Sigmoid colon (tissue), 7 donors: ENCODE measurements at regions of chr16 and their contacts with region 1.

Region 1: GRCh38 chr16:67521095-67521804 is 7.4 kb upstream of the RIPOR1 start:
- DNase-seq: peak; percentile 98
- H3K4me3 ChIP-seq: peak overlapping the region; percentile 26 to 52 (median 50)
- H3K27ac ChIP-seq: peak overlapping the region; percentile 94 to 96 (median 96)
- H3K4me1 ChIP-seq: peaks cover 0 to 16% (median 12%) of the 10 kb centered on the region in 4 donors
- H3K27me3 ChIP-seq: no peaks in the 10 kb centered on the region
- CTCF ChIP-seq: peak; percentile 84 to 96 (median 89)
- EP300 ChIP-seq: no peak
- POLR2A ChIP-seq: no peak

Region 2: GRCh38 chr16:67480833-67481560 is 40.3 kb before region 1 on chr16 and contains the start of gene ATP6V0D1:
- intact Hi-C with region 1: loop called (anchors 5 kb)
- DNase-seq: peak; percentile 99
- H3K4me3 ChIP-seq: peak within 1 kb of the TSS; percentile 82 to 97 (median 94)
- H3K27ac ChIP-seq: peak within 1 kb of the TSS; percentile 87 to 98 (median 94)
- H3K4me1 ChIP-seq: peaks cover 0 to 52% (median 47%) of the 10 kb centered on the region in 4 donors
- H3K27me3 ChIP-seq: no peaks in the 10 kb centered on the region
- CTCF ChIP-seq: peak; percentile 80 to 89 (median 86)
- EP300 ChIP-seq: peak in 1 of 4 donors; percentile 80
- POLR2A ChIP-seq: peak; percentile 57 to 77
- total RNA-seq, gene ATP6V0D1: 70.3 to 112 (median 93.6) TPM

Region 3: DNA sequence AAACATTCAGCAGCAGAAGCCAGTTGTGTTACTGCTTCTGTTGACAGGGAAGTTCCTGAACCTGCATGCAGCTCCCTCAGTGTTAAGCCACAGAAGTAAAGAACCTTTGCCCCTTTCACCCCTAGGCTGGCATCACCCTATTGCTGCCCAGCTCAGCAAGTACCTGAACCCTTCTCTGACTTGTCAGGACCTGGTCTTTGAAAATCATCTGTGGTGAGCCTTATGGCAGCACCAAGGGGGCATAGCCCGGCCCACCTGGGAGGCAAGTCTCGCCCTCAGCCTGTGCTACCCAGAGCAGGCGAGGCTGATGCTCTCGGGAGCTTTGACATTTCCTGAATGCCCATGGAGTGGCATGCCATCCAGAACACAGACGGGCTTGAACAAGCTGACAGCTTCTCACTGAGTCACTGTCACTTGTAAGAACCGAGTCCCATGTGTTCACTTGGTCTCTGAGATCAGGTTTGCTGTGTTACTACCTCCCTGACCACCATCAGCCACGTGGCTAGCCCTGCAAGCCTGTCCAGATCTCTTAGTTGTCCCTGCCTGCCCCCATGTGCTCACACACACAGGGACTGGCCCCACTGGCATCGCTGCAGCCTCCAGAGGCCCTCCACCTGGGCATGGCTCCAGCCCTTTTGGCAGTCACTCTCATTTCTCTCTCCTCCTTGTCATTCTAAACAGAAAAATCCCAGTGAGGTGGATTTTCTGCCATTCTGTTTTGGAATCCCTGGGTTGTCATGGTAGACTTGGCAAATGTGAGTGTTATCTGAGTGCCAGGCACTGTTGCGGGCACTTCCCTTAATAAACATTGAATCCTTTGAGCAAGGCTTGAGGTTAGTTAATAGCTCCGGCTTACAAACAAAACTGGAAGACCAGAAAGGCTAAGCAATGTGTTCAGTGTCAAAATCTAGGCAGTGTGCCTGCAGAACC is 120.8 kb after region 1 on chr16:
- intact Hi-C with region 1: loop called (anchors 1 kb)
- DNase-seq: peak; percentile 89
- H3K4me3 ChIP-seq: no peak overlapping the region
- H3K27ac ChIP-seq: peak overlapping the region; percentile 6 to 51 (median 50)
- H3K4me1 ChIP-seq: peaks cover 0 to 32% (median 22%) of the 10 kb centered on the region in 4 donors
- H3K27me3 ChIP-seq: peaks cover 18 to 29% (median 22%) of the 10 kb centered on the region in 3 donors
- CTCF ChIP-seq: no peak
- EP300 ChIP-seq: no peak
- POLR2A ChIP-seq: no peak

Region 4: DNA sequence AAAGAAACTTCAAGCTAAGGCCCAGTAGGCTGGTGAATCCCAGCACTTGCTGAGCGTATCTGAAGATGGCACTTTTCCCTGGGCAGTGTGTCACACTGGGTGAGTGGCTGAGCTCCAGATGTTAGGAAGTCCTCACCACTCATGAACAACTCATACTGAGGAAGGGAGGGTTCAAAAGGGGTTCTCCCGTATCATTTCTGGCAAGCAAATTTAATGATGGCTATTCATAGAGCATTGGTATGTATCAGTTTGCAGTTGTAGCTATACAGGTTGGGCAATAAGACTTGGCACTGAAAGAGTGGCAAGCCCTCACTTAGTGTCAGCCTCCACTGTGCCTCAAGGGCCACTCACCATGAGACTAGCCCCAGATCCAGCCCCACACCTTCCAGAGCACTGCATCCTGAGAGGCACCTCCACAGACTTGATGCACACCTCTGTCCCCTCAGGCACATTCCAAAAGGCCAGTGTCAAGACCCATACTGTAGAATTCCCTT is 187.2 kb after region 1 on chr16:
- intact Hi-C with region 1: no loop called
- DNase-seq: peak; percentile 32
- H3K4me3 ChIP-seq: no peak overlapping the region
- H3K27ac ChIP-seq: no peak overlapping the region
- H3K4me1 ChIP-seq: no peaks in the 10 kb centered on the region
- H3K27me3 ChIP-seq: no peaks in the 10 kb centered on the region
- CTCF ChIP-seq: no peak
- EP300 ChIP-seq: no peak
- POLR2A ChIP-seq: no peak

Region 5: GRCh38 chr16:67806428-67807147 is 285.3 kb after region 1 on chr16 and contains the starts of genes RANBP10 and TSNAXIP1:
- intact Hi-C with region 1: loop called (anchors 10 kb)
- DNase-seq: peak; percentile 99
- H3K4me3 ChIP-seq: peak within 1 kb of the TSS; percentile 83 to 99 (median 96)
- H3K27ac ChIP-seq: peak within 1 kb of the TSS; percentile 80 to 92 (median 86)
- H3K4me1 ChIP-seq: peaks cover 0 to 28% (median 22%) of the 10 kb centered on the region in 4 donors
- H3K27me3 ChIP-seq: no peaks in the 10 kb centered on the region
- CTCF ChIP-seq: no peak
- EP300 ChIP-seq: no peak
- POLR2A ChIP-seq: peak; percentile 39 to 75
- total RNA-seq, gene RANBP10: 7.1 to 10.0 (median 7.6) TPM
- total RNA-seq, gene TSNAXIP1: 1.1 to 2.9 (median 1.8) TPM

Region 6: DNA sequence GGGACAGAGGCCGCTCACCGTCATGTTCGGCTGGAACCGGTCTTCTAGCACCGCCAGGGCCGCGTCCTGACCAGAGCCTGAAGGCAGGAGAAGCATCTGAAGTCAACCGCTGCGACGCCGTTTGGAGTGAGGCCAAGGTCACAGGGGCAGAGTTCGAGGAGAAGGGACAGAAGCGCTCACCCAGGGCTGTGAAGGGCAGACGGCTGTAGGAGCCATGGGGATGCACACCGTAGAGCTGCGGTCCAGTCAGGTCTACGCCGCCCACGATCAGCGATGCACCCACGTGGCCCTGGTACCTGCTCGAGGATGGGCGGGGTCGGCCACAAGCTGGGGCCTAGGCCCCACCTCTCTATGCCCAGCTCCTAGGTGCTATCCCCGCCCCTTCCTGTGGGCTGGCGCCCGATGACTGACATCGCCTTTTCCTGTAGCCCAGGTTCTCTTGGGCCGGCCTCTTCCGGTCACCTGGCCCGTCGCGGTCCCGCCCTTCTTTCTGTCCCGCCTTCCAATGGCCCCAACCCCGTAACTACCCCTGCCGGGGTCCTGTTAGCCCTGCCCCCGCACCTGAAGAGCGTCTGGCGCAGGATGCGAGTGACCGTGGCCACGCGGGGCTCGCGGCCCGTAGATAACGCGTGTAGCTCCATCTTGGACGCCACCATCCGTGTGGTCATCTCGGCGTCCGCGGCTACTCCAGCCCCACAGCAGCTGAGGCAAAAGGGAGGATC is 414.3 kb after region 1 on chr16:
- intact Hi-C with region 1: loop called (anchors 10 kb)
- DNase-seq: peak; percentile 97
- H3K4me3 ChIP-seq: peak overlapping the region; percentile 77 to 89 (median 84)
- H3K27ac ChIP-seq: peak overlapping the region; percentile 91 to 97 (median 94)
- H3K4me1 ChIP-seq: peaks cover 0 to 34% (median 28%) of the 10 kb centered on the region in 4 donors
- H3K27me3 ChIP-seq: no peaks in the 10 kb centered on the region
- CTCF ChIP-seq: no peak
- EP300 ChIP-seq: no peak
- POLR2A ChIP-seq: peak; percentile 79 to 81